CD4-positive, alpha-beta T cell (primary cell): ENCODE measurements at regions of chr11 and their contacts with region 1.

Region 1: DNA sequence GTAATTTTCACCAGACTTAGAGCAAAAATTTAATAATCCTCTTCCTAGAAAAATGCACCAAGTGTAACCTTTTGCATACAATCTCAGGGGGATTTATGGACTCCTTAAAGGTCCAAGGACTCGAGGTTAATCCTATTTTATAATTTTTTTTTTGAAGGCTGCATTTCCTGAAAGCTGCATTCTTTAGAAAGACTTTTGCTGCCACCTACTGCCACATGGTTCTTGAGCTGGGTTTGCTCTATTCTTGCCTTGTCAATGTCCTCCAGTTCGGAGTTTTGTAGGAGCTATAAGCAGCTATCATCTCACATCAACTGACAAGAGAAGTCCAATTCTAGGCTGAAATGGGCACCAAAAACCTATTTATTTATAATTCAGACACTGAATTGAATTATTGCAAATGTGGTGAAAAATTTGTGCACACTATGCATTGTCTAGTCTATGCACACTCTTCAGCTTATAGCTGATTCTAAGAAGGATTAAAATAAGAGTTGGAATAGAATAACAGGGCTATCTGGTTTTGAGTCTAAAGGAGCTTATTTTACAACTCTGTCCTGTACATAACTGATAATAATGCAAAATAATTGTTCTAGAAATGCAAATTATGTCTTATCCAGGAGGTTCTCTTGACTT is 31.3 kb downstream of the TRAF6 start:
- DNase-seq: peak in 5 of 14 experiments; percentile 7 to 70 (median 56)
- ATAC-seq: no peak
- H3K4me3 ChIP-seq: no peak overlapping the region
- H3K4me3 Mint-ChIP-seq: no peak overlapping the region
- H3K27ac ChIP-seq: no peak overlapping the region
- H3K27ac Mint-ChIP-seq: no peak overlapping the region
- H3K4me1 ChIP-seq: peaks cover 2% of the 10 kb centered on the region
- H3K4me1 Mint-ChIP-seq: peaks cover 2% of the 10 kb centered on the region
- H3K27me3 ChIP-seq: no peaks in the 10 kb centered on the region
- H3K27me3 Mint-ChIP-seq: no peaks in the 10 kb centered on the region
- CTCF ChIP-seq: peak; percentile 57

Region 2: DNA sequence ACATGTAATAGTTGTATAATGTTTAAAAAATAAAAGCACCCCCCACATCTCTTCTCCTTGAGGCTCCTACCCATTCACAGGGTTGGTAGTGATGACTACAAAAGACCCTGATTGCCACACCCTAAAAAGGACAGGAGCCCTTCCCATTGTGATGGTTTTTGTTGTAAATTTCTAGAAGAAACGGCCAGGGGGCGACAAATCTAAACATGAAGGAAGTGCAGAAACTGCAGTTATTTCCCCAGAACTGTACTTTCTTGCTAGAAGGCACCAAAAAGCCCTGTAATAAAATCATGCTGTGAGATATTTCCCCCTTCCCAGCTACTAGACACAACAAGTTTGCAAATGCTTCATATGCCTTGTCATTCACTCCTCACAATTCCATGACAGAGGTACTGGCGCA is 171.9 kb before region 1 on chr11:
- CTCF ChIA-PET with region 1: no interaction called
- POLR2A ChIA-PET with region 1: no interaction called
- intact Hi-C with region 1: loop called in 1 of 2 experiments (anchors 1 kb)
- DNase-seq: peak in 4 of 14 experiments; percentile 15 to 58 (median 46)
- ATAC-seq: no peak
- H3K4me3 ChIP-seq: no peak overlapping the region
- H3K4me3 Mint-ChIP-seq: no peak overlapping the region
- H3K27ac ChIP-seq: no peak overlapping the region
- H3K27ac Mint-ChIP-seq: no peak overlapping the region
- H3K4me1 ChIP-seq: no peaks in the 10 kb centered on the region
- H3K4me1 Mint-ChIP-seq: peaks cover 7% of the 10 kb centered on the region
- H3K27me3 ChIP-seq: peaks cover 0 to 4% of the 10 kb centered on the region in 2 experiments
- H3K27me3 Mint-ChIP-seq: peaks cover 22% of the 10 kb centered on the region
- CTCF ChIP-seq: peak; percentile 33